Activated T-helper 1 cell treated with anti-CD3 and anti-CD28 coated beads, Interleukin-12 subunit alpha, Interleukin-12 subunit beta, Interleukin-2, Interleukin-4 antibody, amounts not matched to agents 30 ng/mL and 10 ng/mL and 1 ng/mL, durations not matched to agents 14 hours and 24 hours and 36 hours (primary cell): ENCODE measurements at regions of chr13 and their contacts with region 1.

Region 1: DNA sequence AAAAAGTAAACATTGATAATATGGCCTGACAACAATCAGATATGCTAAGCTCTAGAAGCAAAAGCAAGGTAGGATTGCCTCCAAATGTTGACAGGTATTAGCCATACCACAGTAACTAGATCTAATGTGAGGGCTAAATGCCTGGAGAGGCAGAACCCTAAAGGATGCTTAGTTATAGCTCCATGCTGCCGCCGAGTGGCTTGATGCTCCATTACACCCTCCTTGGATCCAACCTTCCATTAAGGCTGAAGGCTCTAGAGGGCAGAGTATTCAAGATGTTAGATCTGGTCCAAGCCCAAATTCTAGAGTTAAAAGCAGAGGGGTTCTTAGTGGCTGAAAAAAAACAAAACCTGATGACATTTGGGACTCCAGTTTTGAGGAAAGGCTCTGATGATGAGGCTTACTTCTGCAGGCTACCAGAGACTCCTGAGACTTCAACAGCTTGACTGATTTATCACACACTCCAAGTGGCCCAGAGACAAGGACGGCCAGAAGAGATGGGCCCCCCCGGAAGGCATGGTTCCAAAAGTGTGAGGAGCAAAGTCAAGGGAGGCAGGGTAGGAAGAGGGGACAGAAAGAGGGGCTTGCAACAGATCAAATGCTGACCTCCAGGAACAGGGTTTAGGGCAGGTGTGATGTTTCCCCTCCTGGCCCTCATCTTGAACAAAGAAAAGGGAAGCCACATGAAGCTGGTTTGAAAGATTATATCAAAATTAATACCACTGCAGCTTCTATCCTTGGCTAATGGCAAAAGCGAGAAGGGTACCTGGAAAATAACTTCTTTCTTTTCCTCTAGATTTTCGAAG is 21.9 kb upstream of the CPB2 start:
- DNase-seq: peak; percentile 38
- H3K4me3 Mint-ChIP-seq: no peak overlapping the region
- H3K27ac Mint-ChIP-seq: peak overlapping the region; percentile 19
- H3K4me1 Mint-ChIP-seq: peaks cover 25% of the 10 kb centered on the region
- H3K27me3 Mint-ChIP-seq: peaks cover 2% of the 10 kb centered on the region

Region 2: DNA sequence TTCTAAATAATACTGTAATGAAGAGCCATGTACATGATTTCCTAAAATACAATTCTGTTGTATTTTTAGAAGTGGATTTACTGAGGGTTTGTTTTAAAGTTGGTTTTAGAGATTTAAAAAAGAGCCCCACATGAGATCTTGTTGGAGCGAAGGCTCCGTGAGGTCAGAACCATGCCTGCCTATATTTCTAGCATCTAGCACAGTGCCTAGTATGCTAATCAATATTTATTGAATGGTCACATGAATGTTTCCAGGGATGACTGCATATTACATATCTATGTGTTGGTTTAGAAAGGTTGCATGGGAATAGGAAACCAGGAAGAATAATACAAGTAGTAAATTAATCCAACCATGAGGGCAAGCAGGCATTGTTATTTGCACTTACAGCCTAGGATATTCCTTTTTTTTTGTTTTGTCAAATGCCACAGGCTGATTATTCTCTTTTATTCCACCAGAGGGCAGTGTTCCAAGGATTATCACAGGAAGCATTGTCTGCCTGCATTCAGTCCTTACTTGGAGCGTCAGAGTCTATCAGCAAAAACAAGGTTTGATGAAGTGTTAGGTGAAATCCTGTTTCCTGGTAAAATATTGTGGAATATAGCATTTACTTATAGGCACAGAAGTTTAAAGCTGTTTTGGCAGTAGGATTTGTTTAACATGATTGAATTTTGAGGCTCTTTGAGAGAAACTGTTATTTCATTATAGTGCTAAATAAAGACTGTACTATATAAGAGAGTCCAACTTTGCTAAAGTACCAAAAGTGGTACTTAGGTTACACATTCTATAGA is 615.3 kb before region 1 on chr13:
- intact Hi-C with region 1: loop called (anchors 5 kb)
- DNase-seq: no peak
- H3K4me3 Mint-ChIP-seq: no peak overlapping the region
- H3K27ac Mint-ChIP-seq: no peak overlapping the region
- H3K4me1 Mint-ChIP-seq: peaks cover 9% of the 10 kb centered on the region
- H3K27me3 Mint-ChIP-seq: no peaks in the 10 kb centered on the region

Region 3: GRCh38 chr13:45623515-45624090 is 503.2 kb before region 1 on chr13:
- intact Hi-C with region 1: loop called (anchors 2 kb)
- DNase-seq: no peak
- H3K4me3 Mint-ChIP-seq: no peak overlapping the region
- H3K27ac Mint-ChIP-seq: no peak overlapping the region
- H3K4me1 Mint-ChIP-seq: no peaks in the 10 kb centered on the region
- H3K27me3 Mint-ChIP-seq: peaks cover 14% of the 10 kb centered on the region

Region 4: DNA sequence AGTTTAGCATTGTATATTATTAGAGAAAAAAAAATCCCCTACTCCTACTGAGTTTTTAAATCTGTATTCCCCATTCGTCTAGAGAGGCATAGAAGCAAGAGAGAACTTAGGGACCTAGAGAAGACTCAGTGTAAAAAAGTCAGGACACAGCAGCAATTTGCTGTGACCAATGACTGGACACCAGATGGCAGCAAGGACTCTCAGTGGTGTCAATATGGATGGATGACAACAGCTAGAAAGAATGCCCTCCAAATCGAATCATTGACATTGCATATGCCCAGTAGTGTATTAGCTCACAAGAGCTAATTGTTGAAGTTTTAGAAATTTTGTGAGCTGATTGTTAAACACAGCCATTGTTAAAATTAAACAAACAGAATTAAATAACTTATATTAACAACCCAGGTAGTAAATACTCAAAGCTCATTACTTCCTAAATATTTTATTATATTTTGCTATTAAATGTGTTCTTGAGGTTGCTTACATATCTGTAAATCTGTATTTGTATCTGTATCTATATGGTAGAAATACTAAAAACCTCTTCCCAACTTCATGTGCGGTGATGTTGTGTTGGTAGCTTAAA is 319.1 kb before region 1 on chr13:
- intact Hi-C with region 1: loop called (anchors 5 kb)
- DNase-seq: no peak
- H3K4me3 Mint-ChIP-seq: no peak overlapping the region
- H3K27ac Mint-ChIP-seq: no peak overlapping the region
- H3K4me1 Mint-ChIP-seq: peaks cover 4% of the 10 kb centered on the region
- H3K27me3 Mint-ChIP-seq: peaks cover 2% of the 10 kb centered on the region

Region 5: DNA sequence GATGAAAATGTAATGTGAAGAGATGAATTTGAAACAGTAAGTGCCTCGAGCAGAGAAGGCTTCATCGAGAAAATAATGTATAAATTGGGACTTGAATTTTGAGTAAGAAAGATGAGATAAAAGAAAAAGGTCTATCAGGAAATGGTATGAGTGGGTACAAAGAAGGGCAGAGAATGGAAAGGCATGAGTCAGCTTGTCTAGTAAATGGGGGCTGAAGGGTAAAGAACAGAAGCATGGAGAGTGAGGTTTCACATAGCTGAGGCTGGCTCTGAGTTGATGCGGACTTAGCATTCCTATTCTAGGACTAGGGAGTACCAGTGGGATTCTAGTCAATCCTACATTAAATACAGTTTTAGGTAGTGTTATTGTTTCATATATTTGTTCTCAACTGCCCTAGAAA is 160.0 kb before region 1 on chr13:
- intact Hi-C with region 1: loop called (anchors 10 kb)
- DNase-seq: no peak
- H3K4me3 Mint-ChIP-seq: no peak overlapping the region
- H3K27ac Mint-ChIP-seq: no peak overlapping the region
- H3K4me1 Mint-ChIP-seq: peaks cover 16% of the 10 kb centered on the region
- H3K27me3 Mint-ChIP-seq: no peaks in the 10 kb centered on the region

Region 6: GRCh38 chr13:46184277-46184699 is 57.5 kb after region 1 on chr13:
- intact Hi-C with region 1: no loop called
- DNase-seq: peak; percentile 64
- H3K4me3 Mint-ChIP-seq: peak overlapping the region; percentile 97
- H3K27ac Mint-ChIP-seq: peak overlapping the region; percentile 99
- H3K4me1 Mint-ChIP-seq: peaks cover 39% of the 10 kb centered on the region
- H3K27me3 Mint-ChIP-seq: no peaks in the 10 kb centered on the region